HCT116 (cell line): ENCODE measurements at regions of chr17 and their contacts with region 1.

Region 1: DNA sequence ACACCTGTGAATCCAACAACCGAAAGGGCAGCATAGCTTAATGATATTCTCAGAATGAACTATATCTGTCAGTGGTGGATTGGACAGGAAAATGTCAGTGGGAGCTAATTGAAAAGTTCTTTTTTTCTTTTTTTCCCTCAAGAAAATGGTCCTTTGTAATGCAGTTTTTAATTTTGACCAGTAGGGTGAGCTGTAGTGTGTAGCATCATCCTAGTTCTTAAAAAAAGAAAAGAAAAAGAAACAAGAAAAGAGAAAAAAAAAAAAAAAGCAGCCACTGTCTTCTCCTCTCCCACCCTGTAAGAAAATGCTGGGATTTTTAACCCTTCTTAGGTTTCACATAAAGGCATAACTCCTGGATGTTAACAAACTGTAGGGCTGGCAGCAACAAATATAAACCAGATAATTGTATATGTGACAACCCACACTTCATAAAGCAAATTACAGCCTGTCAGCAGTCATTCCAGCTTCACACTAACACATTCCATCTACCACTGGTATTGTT is 78.1 kb downstream of the SKAP1 start:
- DNase-seq: peak; percentile 46
- ATAC-seq: peak; percentile 69
- H3K4me3 ChIP-seq: no peak overlapping the region
- H3K27ac ChIP-seq: no peak overlapping the region
- H3K4me1 ChIP-seq: peaks cover 4 to 9% of the 10 kb centered on the region in 2 experiments
- H3K27me3 ChIP-seq: no peaks in the 10 kb centered on the region
- CTCF ChIP-seq: peak; percentile 67 to 90 (median 80); a peak in 5 of 6 replicates
- POLR2A ChIP-seq: no peak
- RAD21 ChIP-seq: peak; percentile 76

Region 2: GRCh38 chr17:48244121-48244711 is 107.7 kb before region 1 on chr17:
- CTCF ChIA-PET with region 1: no interaction called
- POLR2A ChIA-PET with region 1: no interaction called
- RAD21 ChIA-PET with region 1: no interaction called
- intact Hi-C with region 1: no loop called
- DNase-seq: peak; percentile 73
- ATAC-seq: peak; percentile 35
- H3K4me3 ChIP-seq: peak overlapping the region in 1 of 2 experiments; percentile 1; a peak in 2 of 4 replicates
- H3K27ac ChIP-seq: peak overlapping the region; percentile 75
- H3K4me1 ChIP-seq: peaks cover 71 to 89% of the 10 kb centered on the region in 2 experiments
- H3K27me3 ChIP-seq: no peaks in the 10 kb centered on the region
- CTCF ChIP-seq: 0 out of 6 replicates have a peak, but pooled peaks of 1 of the 3 experiments have one; percentile 8
- POLR2A ChIP-seq: no peak
- RAD21 ChIP-seq: peak; percentile 26; the same call in 1 of the 2 replicates

Region 3: DNA sequence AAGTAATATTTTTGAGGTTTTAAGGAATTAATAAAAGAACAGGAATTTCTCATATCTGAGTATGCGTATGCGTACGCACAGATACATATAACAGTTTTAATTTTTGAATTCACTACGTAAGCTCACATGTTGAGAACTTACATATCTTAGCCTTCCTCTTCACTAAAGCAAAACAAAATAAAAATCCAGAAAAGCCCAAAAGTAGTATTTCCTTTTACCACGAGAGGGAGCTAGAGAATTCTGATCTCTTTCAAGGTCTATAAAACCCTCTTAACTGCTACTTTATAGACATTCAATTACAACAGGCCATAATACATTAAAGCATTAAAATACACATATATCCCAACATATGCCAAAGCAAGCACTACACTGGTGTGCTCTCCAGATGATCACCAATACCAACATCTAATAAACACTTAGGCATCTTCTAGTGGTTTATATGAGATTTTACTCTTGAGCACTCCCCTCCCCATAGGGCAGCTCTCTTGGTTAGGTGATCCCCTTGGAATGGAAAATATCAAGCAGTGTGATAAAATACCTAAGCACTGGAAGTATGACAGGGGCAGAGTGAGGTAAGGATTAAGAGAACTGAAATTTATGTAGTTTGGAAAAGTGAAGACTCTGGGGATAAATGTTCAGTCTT is 15.9 kb before region 1 on chr17:
- CTCF ChIA-PET with region 1: interaction called, 36 read pairs
- POLR2A ChIA-PET with region 1: no interaction called
- RAD21 ChIA-PET with region 1: no interaction called
- intact Hi-C with region 1: no loop called
- DNase-seq: peak; percentile 78
- ATAC-seq: peak; percentile 85
- H3K4me3 ChIP-seq: no peak overlapping the region
- H3K27ac ChIP-seq: no peak overlapping the region
- H3K4me1 ChIP-seq: peaks cover 0 to 9% of the 10 kb centered on the region in 2 experiments; a peak in 2 of 4 replicates
- H3K27me3 ChIP-seq: no peaks in the 10 kb centered on the region
- CTCF ChIP-seq: peak; percentile 64 to 93 (median 92)
- POLR2A ChIP-seq: no peak
- RAD21 ChIP-seq: peak; percentile 85

Region 4: DNA sequence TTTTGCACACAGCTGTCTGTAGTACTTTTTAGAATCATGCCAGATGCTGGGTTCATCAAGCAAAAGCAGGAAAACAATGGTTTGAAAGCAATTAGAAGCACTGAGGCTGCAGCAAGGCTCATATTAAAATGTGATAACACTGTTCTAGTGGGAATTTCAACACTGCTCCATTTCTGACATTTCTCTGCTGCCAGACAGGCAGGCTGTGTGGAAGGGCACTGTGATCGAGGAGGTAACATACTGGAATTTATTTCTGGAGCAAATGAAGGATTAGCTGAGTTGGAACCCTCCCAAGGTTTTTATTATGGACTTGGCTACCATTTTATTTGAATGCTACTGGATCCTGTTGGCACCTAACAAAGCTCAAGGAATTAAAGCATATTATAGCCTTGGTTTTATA is 11.3 kb after region 1 on chr17:
- CTCF ChIA-PET with region 1: interaction called, 52 read pairs
- POLR2A ChIA-PET with region 1: no interaction called
- RAD21 ChIA-PET with region 1: no interaction called
- intact Hi-C with region 1: no loop called
- DNase-seq: no peak
- ATAC-seq: no peak
- H3K4me3 ChIP-seq: no peak overlapping the region
- H3K27ac ChIP-seq: no peak overlapping the region
- H3K4me1 ChIP-seq: no peaks in the 10 kb centered on the region
- H3K27me3 ChIP-seq: no peaks in the 10 kb centered on the region
- CTCF ChIP-seq: no peak
- POLR2A ChIP-seq: no peak
- RAD21 ChIP-seq: no peak

Region 5: DNA sequence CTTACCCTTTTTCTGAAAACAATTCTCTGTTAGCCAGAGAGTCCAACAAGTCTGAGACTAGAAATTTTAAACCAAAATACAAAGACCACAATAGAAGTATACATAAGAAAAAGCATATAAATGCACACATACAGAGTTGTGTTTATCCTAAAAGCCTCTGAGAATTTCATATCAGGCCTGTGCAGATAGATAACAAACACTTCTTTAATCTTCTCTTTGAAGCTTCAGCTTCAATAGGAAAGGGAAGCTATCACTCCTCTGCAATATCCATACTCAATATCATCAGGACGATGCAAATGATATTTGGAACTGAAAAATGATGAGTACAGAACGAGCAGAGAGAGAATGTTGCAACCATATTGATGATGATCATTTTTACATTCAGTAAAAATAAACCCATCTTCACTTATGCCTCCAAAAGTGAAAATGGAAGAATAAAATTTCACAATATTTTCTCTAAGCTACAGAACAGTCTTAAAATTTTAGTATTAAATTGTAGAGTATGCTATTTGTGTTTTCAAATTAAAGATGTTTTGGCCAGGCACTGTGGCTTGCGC is 16.5 kb after region 1 on chr17:
- CTCF ChIA-PET with region 1: interaction called, 52 read pairs
- POLR2A ChIA-PET with region 1: no interaction called
- RAD21 ChIA-PET with region 1: no interaction called
- intact Hi-C with region 1: no loop called
- DNase-seq: no peak
- ATAC-seq: no peak
- H3K4me3 ChIP-seq: no peak overlapping the region
- H3K27ac ChIP-seq: no peak overlapping the region
- H3K4me1 ChIP-seq: no peaks in the 10 kb centered on the region
- H3K27me3 ChIP-seq: no peaks in the 10 kb centered on the region
- CTCF ChIP-seq: no peak
- POLR2A ChIP-seq: no peak
- RAD21 ChIP-seq: no peak

Region 6: DNA sequence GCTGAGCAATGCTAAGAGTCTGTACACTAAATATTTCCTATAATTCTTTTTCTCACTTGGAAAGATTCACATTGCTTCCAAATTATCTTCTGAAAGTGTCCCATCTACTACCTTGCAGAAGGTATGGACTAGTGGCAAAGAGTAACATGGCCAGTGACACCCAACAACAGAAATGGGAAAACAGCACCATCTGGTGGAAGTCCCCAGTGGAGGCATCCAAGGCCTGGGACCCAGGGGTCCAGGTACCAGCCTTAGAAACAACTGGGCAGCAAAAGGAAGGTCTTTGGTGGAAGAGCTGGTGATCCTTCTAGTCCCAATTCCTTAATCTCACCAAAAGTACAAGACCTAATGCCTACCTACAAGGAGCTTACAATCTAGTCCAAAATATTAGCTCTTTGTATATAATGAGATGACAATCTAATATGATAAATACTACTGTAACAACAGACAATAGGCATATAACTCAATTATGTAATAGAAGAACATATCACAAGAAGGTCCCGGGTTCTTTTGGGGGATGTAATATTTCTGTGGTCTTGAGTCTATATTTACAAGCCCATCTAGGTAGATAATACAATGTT is 22.9 kb after region 1 on chr17:
- CTCF ChIA-PET with region 1: interaction called, 12 read pairs
- POLR2A ChIA-PET with region 1: no interaction called
- RAD21 ChIA-PET with region 1: no interaction called
- intact Hi-C with region 1: no loop called
- DNase-seq: peak; percentile 63
- ATAC-seq: peak; percentile 99
- H3K4me3 ChIP-seq: no peak overlapping the region
- H3K27ac ChIP-seq: no peak overlapping the region
- H3K4me1 ChIP-seq: no peaks in the 10 kb centered on the region
- H3K27me3 ChIP-seq: no peaks in the 10 kb centered on the region
- CTCF ChIP-seq: peak; percentile 92 to 97 (median 94)
- POLR2A ChIP-seq: no peak
- RAD21 ChIP-seq: peak; percentile 91

Region 7: GRCh38 chr17:48618256-48618897 is 266.5 kb after region 1 on chr17:
- CTCF ChIA-PET with region 1: interaction called, 13 read pairs
- POLR2A ChIA-PET with region 1: no interaction called
- RAD21 ChIA-PET with region 1: interaction called in 1 of 2 experiments, 3 read pairs
- intact Hi-C with region 1: loop called (anchors 5 kb)
- DNase-seq: peak; percentile 74
- ATAC-seq: peak; percentile 71
- H3K4me3 ChIP-seq: peak overlapping the region; percentile 80 to 90
- H3K27ac ChIP-seq: peak overlapping the region; percentile 88
- H3K4me1 ChIP-seq: peaks cover 8 to 37% of the 10 kb centered on the region in 2 experiments; a peak in 3 of 4 replicates
- H3K27me3 ChIP-seq: no peaks in the 10 kb centered on the region
- CTCF ChIP-seq: peak; percentile 97 to 100 (median 98); a peak in 5 of 6 replicates
- POLR2A ChIP-seq: no peak
- RAD21 ChIP-seq: peak; percentile 99